MCF 10A (cell line): ENCODE measurements at regions of chr17 and their contacts with region 1.

Region 1: GRCh38 chr17:55513885-55514591 is 2.8 kb upstream of the SMIM36 start:
- DNase-seq: peak; percentile 80
- H3K4me3 Mint-ChIP-seq: no peak overlapping the region
- H3K27ac Mint-ChIP-seq: no peak overlapping the region
- H3K4me1 Mint-ChIP-seq: no peaks in the 10 kb centered on the region
- H3K27me3 Mint-ChIP-seq: peaks cover 10% of the 10 kb centered on the region
- CTCF ChIP-seq: peak; percentile 82

Region 2: GRCh38 chr17:55053855-55054254 is 460.2 kb before region 1 on chr17:
- CTCF ChIA-PET with region 1: interaction called, 4 read pairs
- POLR2A ChIA-PET with region 1: no interaction called
- intact Hi-C with region 1: loop called (anchors 1 kb)
- DNase-seq: no peak
- H3K4me3 Mint-ChIP-seq: no peak overlapping the region
- H3K27ac Mint-ChIP-seq: no peak overlapping the region
- H3K4me1 Mint-ChIP-seq: no peaks in the 10 kb centered on the region
- H3K27me3 Mint-ChIP-seq: no peaks in the 10 kb centered on the region
- CTCF ChIP-seq: peak; percentile 43

Region 3: GRCh38 chr17:55348749-55349354 is 165.2 kb before region 1 on chr17:
- CTCF ChIA-PET with region 1: interaction called, 36 read pairs
- POLR2A ChIA-PET with region 1: no interaction called
- intact Hi-C with region 1: loop called (anchors 2 kb)
- DNase-seq: peak; percentile 60
- H3K4me3 Mint-ChIP-seq: no peak overlapping the region
- H3K27ac Mint-ChIP-seq: no peak overlapping the region
- H3K4me1 Mint-ChIP-seq: peaks cover 5% of the 10 kb centered on the region
- H3K27me3 Mint-ChIP-seq: no peaks in the 10 kb centered on the region
- CTCF ChIP-seq: peak; percentile 75

Region 4: GRCh38 chr17:55433629-55434305 is 80.3 kb before region 1 on chr17:
- CTCF ChIA-PET with region 1: interaction called, 8 read pairs
- POLR2A ChIA-PET with region 1: interaction called, 3 read pairs
- intact Hi-C with region 1: loop called (anchors 5 kb)
- DNase-seq: peak; percentile 95
- H3K4me3 Mint-ChIP-seq: peak overlapping the region; percentile 30
- H3K27ac Mint-ChIP-seq: peak overlapping the region; percentile 96
- H3K4me1 Mint-ChIP-seq: peaks cover 44% of the 10 kb centered on the region
- H3K27me3 Mint-ChIP-seq: no peaks in the 10 kb centered on the region
- CTCF ChIP-seq: no peak